Transverse colon (tissue), 4 donors: ENCODE measurements at regions of chr14 and their contacts with region 1.

Region 1: GRCh38 chr14:51277753-51278415 is 37.8 kb downstream of the TMX1 start:
- DNase-seq: no peak
- H3K4me3 ChIP-seq: no peak overlapping the region
- H3K27ac ChIP-seq: no peak overlapping the region
- H3K4me1 ChIP-seq: peaks cover 0 to 2% (median 0%) of the 10 kb centered on the region in 4 donors
- H3K27me3 ChIP-seq: no peaks in the 10 kb centered on the region
- CTCF ChIP-seq: no peak
- EP300 ChIP-seq: no peak
- POLR2A ChIP-seq: no peak

Region 2: GRCh38 chr14:51262868-51263267 is 15.0 kb before region 1 on chr14:
- in situ Hi-C with region 1: no loop called
- intact Hi-C with region 1: loop called (anchors 1 kb)
- DNase-seq: no peak
- H3K4me3 ChIP-seq: no peak overlapping the region
- H3K27ac ChIP-seq: no peak overlapping the region
- H3K4me1 ChIP-seq: no peaks in the 10 kb centered on the region
- H3K27me3 ChIP-seq: no peaks in the 10 kb centered on the region
- CTCF ChIP-seq: no peak
- EP300 ChIP-seq: no peak
- POLR2A ChIP-seq: no peak